ENCODE measurements at regions of chr10 and their contacts with region 1.

Region 1: GRCh38 chr10:61903221-61903927 is 1.9 kb downstream of the ARID5B start:
- DNase-seq: peak; percentile 78
- ATAC-seq: peak; percentile 30
- H3K4me3 ChIP-seq: peak overlapping the region; percentile 75
- H3K27ac ChIP-seq: peak overlapping the region; percentile 52
- H3K4me1 ChIP-seq: peaks cover 30% of the 10 kb centered on the region
- H3K27me3 ChIP-seq: no peaks in the 10 kb centered on the region
- CTCF ChIP-seq: peak; percentile 66

Region 2: GRCh38 chr10:61465901-61466632 is 437.3 kb before region 1 on chr10:
- CTCF ChIA-PET with region 1: no interaction called
- POLR2A ChIA-PET with region 1: no interaction called
- intact Hi-C with region 1: loop called (anchors 5 kb)
- DNase-seq: no peak
- ATAC-seq: no peak
- H3K4me3 ChIP-seq: no peak overlapping the region
- H3K27ac ChIP-seq: no peak overlapping the region
- H3K4me1 ChIP-seq: peaks cover 29% of the 10 kb centered on the region
- H3K27me3 ChIP-seq: no peaks in the 10 kb centered on the region
- CTCF ChIP-seq: peak; percentile 53

Region 3: DNA sequence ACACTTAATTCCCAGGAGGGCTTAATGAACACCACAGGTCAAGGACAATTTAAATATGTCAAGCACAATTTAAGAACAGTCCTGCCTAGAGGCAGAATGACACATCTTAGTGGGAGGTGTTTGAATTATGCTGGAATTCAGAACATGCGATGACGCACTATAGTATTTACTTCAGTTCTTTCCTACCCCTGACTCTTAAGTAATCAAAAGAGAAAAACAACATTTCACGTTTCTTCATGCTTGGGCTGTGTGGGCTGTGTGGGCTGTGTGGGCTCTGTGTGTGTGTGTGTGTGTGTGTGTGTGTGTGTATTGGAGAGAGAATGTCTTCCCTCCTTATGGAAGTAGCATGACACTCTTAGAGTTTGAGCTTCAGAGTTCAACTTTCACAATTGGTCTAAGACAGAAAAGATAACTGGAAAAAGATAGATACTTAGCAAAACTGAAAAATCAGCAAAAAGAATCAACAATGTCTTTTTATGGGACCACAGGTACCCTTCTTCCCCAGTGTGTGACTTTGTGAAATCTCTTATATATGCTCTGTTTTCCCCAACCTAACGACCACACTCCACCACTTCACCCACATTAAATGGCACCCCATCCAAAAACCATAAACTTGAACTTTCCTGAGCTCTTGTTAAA is 274.4 kb before region 1 on chr10:
- CTCF ChIA-PET with region 1: no interaction called
- POLR2A ChIA-PET with region 1: no interaction called
- intact Hi-C with region 1: loop called (anchors 5 kb)
- DNase-seq: peak; percentile 100
- ATAC-seq: peak; percentile 93
- H3K4me3 ChIP-seq: no peak overlapping the region
- H3K27ac ChIP-seq: peak overlapping the region; percentile 1; the same call in 1 of the 2 replicates
- H3K4me1 ChIP-seq: peaks cover 31% of the 10 kb centered on the region
- H3K27me3 ChIP-seq: no peaks in the 10 kb centered on the region
- CTCF ChIP-seq: no peak

Region 4: GRCh38 chr10:61937631-61938351 is 34.4 kb after region 1 on chr10:
- CTCF ChIA-PET with region 1: interaction called, 17 read pairs
- POLR2A ChIA-PET with region 1: interaction called, 16 read pairs
- intact Hi-C with region 1: loop called (anchors 1 kb)
- DNase-seq: peak; percentile 100
- ATAC-seq: peak; percentile 55
- H3K4me3 ChIP-seq: peak overlapping the region; percentile 5; the same call in 1 of the 2 replicates
- H3K27ac ChIP-seq: peak overlapping the region; percentile 81
- H3K4me1 ChIP-seq: peaks cover 59% of the 10 kb centered on the region
- H3K27me3 ChIP-seq: no peaks in the 10 kb centered on the region
- CTCF ChIP-seq: no peak

Region 5: DNA sequence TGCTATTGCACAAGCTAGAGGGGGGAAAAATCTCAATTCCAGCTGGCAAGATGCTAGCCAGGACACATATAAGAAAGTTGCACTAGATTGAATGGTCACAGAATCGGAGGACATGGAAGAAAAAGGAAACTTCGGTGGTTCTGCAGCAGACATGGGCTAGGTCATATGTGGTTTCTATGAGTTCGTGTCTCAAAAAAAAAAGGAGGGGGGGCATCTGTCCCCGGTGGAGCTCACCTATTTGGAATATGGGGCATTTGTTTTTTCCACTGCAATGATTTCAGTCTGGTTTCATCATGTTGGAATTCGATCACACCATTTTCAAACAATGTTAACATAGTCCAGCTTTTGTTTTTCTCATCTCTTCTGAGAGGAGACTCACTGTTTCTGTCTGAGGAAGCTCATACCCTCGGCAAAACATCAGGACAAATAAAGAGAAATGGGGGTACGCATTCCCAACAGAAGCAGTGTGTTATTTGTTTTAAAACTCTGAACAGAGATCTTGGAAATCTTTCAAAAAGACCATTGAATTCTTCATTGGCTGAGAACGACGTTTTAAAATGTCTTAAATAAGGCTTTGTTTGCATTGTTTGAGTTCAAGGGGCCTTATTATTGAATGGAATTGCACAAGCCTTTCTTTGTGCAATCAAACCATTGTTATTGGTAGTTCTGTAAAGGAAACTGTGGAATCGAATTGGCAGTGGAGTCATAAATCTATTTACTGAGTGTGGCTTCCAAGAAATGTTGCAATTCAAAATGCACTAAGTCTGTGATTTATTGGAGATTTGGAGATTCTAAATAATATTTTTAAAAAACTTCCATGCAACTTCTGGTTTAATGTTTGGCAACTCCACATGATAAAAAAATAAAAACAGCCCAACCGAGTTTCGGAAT is 192.1 kb after region 1 on chr10:
- CTCF ChIA-PET with region 1: interaction called, 3 read pairs
- POLR2A ChIA-PET with region 1: no interaction called
- intact Hi-C with region 1: loop called (anchors 5 kb)
- DNase-seq: peak; percentile 97
- ATAC-seq: peak; percentile 50
- H3K4me3 ChIP-seq: peak overlapping the region; percentile 43
- H3K27ac ChIP-seq: peak overlapping the region; percentile 57
- H3K4me1 ChIP-seq: peaks cover 43% of the 10 kb centered on the region
- H3K27me3 ChIP-seq: no peaks in the 10 kb centered on the region
- CTCF ChIP-seq: no peak

Region 6: DNA sequence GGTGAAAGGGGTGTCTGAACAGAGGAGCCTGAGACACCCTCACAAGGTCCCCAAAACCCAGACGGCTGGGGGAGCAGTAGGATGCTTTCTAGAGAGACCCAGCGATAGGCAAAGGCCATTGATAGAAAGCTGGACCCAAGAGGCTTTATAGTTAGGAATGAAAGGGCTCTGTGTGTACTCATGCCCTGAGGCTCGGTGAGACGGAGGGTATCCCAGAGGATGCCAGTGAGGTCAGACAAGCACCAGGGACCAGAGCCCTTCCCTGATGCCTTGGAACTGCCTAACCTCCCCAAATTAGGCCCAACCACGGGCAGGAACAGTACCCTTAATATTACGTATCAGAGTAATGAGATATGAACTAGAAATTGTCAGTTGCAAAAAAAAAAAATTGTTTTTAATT is 413.9 kb after region 1 on chr10:
- CTCF ChIA-PET with region 1: no interaction called
- POLR2A ChIA-PET with region 1: no interaction called
- intact Hi-C with region 1: no loop called
- DNase-seq: no peak
- ATAC-seq: no peak
- H3K4me3 ChIP-seq: no peak overlapping the region
- H3K27ac ChIP-seq: no peak overlapping the region
- H3K4me1 ChIP-seq: no peaks in the 10 kb centered on the region
- H3K27me3 ChIP-seq: no peaks in the 10 kb centered on the region
- CTCF ChIP-seq: no peak

Region 7: DNA sequence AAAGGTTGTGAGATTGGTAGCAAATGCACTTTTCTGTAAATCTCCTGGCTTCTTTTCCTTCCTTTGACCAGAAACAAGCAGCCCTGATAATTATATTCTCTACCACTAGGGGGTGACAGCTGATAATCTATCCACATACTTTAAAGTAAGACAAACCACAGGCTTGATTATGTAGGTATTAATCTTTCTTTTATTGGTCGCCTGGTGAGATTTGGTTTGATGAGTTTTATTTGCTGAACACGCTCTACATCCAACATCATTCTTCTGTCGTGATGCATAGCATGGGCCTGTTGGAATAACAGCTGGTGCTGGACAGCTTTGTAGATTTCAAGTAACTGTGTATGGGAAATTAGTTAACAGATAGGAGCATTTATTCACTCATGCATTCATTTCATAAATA is 534.3 kb after region 1 on chr10:
- CTCF ChIA-PET with region 1: interaction called, 3 read pairs
- POLR2A ChIA-PET with region 1: no interaction called
- intact Hi-C with region 1: loop called (anchors 2 kb)
- DNase-seq: peak; percentile 100
- ATAC-seq: peak; percentile 67
- H3K4me3 ChIP-seq: no peak overlapping the region
- H3K27ac ChIP-seq: no peak overlapping the region
- H3K4me1 ChIP-seq: peaks cover 24% of the 10 kb centered on the region
- H3K27me3 ChIP-seq: no peaks in the 10 kb centered on the region
- CTCF ChIP-seq: peak; percentile 100